ENCODE measurements at regions of chr1 and their contacts with region 1.

Region 1: DNA sequence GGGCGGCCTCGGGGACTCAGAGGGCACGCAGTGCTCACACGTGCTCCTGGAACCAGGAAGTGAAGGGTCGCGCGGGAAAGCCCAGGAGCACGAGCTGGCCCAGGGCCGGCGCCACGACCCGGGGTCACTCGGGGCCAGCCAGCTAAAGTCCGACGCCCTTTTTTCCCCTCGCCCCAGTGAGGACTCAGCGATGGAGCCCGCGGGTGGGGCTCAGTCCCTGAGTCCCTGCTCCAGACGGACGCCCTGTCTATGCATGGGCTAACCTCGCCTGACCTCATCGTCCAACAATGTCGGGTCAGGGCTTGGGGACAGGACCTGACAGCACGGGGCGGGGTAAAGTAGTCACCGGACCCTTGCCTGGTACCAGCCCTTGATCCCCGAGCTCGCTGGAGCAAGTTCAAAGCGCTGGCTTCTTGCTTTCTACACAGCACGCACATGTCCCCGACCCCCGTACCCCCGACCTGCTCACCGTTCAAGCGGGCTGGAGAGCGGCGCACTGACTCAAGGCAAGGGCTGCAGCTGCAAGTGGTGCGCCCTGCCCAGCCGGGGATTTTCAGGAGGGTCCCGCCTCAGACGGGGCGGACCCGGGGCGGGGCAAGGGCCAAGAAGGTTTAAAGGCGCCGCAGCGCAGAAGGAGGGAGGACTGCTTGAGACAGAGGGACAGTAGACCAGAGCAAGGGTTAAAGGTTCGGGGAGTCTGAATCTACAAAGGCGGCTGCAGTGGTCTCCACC is at the start of gene TAGLN2:
- DNase-seq: peak; percentile 95
- H3K4me3 Mint-ChIP-seq: peak within 1 kb of the TSS; percentile 83
- H3K27ac Mint-ChIP-seq: peak within 1 kb of the TSS; percentile 98
- H3K4me1 Mint-ChIP-seq: peaks cover 48% of the 10 kb centered on the region
- H3K27me3 Mint-ChIP-seq: no peaks in the 10 kb centered on the region
- CTCF ChIP-seq: no peak
- total RNA-seq, gene TAGLN2: 612 and 708 TPM in 2 replicates

Region 2: DNA sequence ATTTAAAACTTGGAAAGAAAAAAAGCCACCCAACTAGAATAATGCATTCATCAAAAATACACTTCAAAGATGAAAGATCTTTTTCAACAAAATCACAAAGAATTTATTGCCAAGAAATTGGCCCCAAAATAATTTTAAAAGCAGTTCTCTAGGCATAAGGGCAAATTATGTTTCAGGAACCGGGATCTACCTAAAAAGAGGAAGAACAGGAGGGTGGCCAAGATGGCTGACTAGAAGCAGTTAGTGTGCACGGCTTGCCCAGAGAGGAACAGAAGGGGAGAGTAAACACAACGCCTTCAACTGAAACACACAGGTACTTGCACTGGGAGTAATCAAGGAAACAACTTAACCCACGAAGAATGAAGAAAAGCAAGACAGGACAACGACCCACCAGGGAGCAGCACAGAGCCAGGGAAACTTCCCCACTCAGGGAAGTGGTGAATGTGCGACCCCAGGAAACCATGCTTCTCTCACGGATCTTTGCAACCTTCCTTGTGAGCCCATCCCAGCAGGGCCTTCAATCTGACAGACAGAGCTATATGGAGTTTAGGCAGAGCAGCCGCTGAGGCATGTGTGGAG is 674.4 kb before region 1 on chr1:
- CTCF ChIA-PET with region 1: no interaction called
- intact Hi-C with region 1: no loop called
- DNase-seq: no peak
- H3K4me3 Mint-ChIP-seq: no peak overlapping the region
- H3K27ac Mint-ChIP-seq: no peak overlapping the region
- H3K4me1 Mint-ChIP-seq: no peaks in the 10 kb centered on the region
- H3K27me3 Mint-ChIP-seq: no peaks in the 10 kb centered on the region
- CTCF ChIP-seq: no peak

Region 3: DNA sequence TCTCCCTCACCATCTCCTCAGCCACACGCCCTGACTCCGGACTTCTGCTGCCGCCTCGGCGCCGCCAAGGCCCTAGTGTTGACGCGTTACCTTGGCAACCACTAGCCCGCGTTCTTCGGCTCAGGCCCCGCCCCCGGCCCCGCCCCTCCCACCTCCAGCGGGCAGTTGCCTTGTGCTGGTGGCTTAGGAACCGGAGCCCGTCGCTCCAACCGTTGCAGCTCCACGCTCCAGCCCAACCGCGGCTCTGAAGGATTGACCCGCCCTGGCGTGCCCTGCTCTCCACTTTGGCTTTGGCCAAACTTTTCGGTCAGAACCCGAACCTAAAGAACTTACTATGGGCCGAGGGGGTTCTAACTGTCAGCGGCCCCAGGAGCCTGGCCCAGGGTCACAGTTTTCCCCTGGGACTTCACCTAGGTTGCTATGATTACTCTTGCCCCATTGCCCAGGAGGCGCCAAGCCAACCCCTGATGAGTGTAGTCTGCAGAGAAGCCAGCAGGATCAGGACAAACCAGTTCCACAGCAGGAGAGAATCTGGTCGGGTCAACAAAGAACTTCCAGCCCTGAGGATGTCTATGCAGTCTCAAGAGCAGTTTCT is 25.0 kb before region 1 on chr1 and contains the start of gene CFAP45:
- CTCF ChIA-PET with region 1: interaction called, 42 read pairs
- intact Hi-C with region 1: loop called (anchors 1 kb)
- DNase-seq: peak; percentile 88
- H3K4me3 Mint-ChIP-seq: peak within 1 kb of the TSS; percentile 48
- H3K27ac Mint-ChIP-seq: peak within 1 kb of the TSS; percentile 84
- H3K4me1 Mint-ChIP-seq: peaks cover 33% of the 10 kb centered on the region
- H3K27me3 Mint-ChIP-seq: no peaks in the 10 kb centered on the region
- CTCF ChIP-seq: no peak
- total RNA-seq, gene CFAP45: 1.6 and 1.8 TPM in 2 replicates

Region 4: GRCh38 chr1:159913451-159914192 is 11.5 kb before region 1 on chr1:
- CTCF ChIA-PET with region 1: interaction called, 6 read pairs
- intact Hi-C with region 1: loop called (anchors 1 kb)
- DNase-seq: peak; percentile 67
- H3K4me3 Mint-ChIP-seq: peak overlapping the region; percentile 15
- H3K27ac Mint-ChIP-seq: peak overlapping the region; percentile 61
- H3K4me1 Mint-ChIP-seq: peaks cover 97% of the 10 kb centered on the region
- H3K27me3 Mint-ChIP-seq: no peaks in the 10 kb centered on the region
- CTCF ChIP-seq: no peak

Region 5: GRCh38 chr1:159996653-159997052 is 71.5 kb after region 1 on chr1:
- CTCF ChIA-PET with region 1: no interaction called
- intact Hi-C with region 1: no loop called
- DNase-seq: peak; percentile 16
- H3K4me3 Mint-ChIP-seq: no peak overlapping the region
- H3K27ac Mint-ChIP-seq: no peak overlapping the region
- H3K4me1 Mint-ChIP-seq: peaks cover 9% of the 10 kb centered on the region
- H3K27me3 Mint-ChIP-seq: peaks cover 31% of the 10 kb centered on the region
- CTCF ChIP-seq: no peak

Region 6: DNA sequence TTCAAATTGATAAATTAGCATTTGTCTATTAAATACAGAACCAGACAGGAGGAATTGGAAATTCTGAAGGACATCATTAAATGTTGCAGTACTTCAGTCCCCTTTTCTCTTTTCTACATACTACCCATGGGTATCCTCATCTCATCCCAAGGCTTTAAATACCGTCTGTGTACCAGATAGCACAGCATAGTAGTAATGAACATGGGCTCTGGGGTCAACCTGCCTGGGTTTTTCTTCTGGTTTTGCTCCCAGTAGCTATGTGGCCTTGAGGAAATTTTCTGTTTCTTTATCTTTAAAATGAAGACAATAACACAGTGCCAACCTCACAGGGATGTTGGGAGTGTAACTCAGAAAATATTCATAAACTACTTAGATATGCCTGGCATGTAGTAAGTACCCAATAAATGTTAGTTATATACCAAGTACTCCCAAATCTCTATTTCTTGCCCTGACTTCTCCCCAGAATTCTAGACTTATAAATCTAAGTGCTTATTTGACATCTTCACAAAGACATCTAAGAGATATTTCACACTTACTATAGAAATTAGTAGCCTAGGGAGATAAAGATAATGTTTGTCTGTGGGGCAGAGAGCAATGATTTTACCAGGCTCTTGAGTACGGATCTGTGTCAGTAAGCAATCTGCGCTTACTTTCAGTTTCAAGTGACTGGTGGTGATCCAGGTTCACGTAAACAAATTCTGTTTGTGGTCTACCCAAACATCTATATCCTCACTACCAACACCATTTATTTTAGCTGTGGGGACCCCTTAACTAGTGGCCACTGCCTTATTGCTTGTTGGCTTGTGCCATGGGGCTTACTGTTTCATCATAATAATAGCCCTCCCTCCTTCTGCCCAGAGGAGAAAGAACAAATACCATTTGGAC is 512.5 kb after region 1 on chr1:
- CTCF ChIA-PET with region 1: no interaction called
- intact Hi-C with region 1: no loop called
- DNase-seq: no peak
- H3K4me3 Mint-ChIP-seq: no peak overlapping the region
- H3K27ac Mint-ChIP-seq: no peak overlapping the region
- H3K4me1 Mint-ChIP-seq: no peaks in the 10 kb centered on the region
- H3K27me3 Mint-ChIP-seq: peaks cover 27% of the 10 kb centered on the region
- CTCF ChIP-seq: no peak

Measured in Calu3 (cell line).